Activated T-helper 1 cell treated with anti-CD3 and anti-CD28 coated beads, Interleukin-12 subunit alpha, Interleukin-12 subunit beta, Interleukin-2, Interleukin-4 antibody, amounts not matched to agents 30 ng/mL and 10 ng/mL and 1 ng/mL, durations not matched to agents 14 hours and 24 hours and 36 hours (primary cell): ENCODE measurements at regions of chr12 and their contacts with region 1.

Region 1: GRCh38 chr12:51326762-51327439 is 2.9 kb upstream of the BIN2 start:
- DNase-seq: peak; percentile 6
- H3K4me3 Mint-ChIP-seq: peak overlapping the region; percentile 55
- H3K27ac Mint-ChIP-seq: peak overlapping the region; percentile 89
- H3K4me1 Mint-ChIP-seq: peaks cover 75% of the 10 kb centered on the region
- H3K27me3 Mint-ChIP-seq: no peaks in the 10 kb centered on the region

Region 2: GRCh38 chr12:51025836-51026638 is 300.9 kb before region 1 on chr12 and contains the start of gene SLC11A2:
- intact Hi-C with region 1: loop called (anchors 2 kb)
- DNase-seq: peak; percentile 91
- H3K4me3 Mint-ChIP-seq: peak within 1 kb of the TSS; percentile 92
- H3K27ac Mint-ChIP-seq: peak within 1 kb of the TSS; percentile 98
- H3K4me1 Mint-ChIP-seq: peaks cover 55% of the 10 kb centered on the region
- H3K27me3 Mint-ChIP-seq: peaks cover 18% of the 10 kb centered on the region
- total RNA-seq, gene SLC11A2: 56.9 and 63.9 TPM in 2 replicates

Region 3: GRCh38 chr12:51217968-51218606 is 108.8 kb before region 1 on chr12 and contains the start of gene POU6F1:
- intact Hi-C with region 1: loop called (anchors 5 kb)
- DNase-seq: peak; percentile 60
- H3K4me3 Mint-ChIP-seq: peak within 1 kb of the TSS; percentile 76
- H3K27ac Mint-ChIP-seq: peak within 1 kb of the TSS; percentile 56
- H3K4me1 Mint-ChIP-seq: peaks cover 21% of the 10 kb centered on the region
- H3K27me3 Mint-ChIP-seq: no peaks in the 10 kb centered on the region
- total RNA-seq, gene POU6F1: 5.2 and 6.7 TPM in 2 replicates

Region 4: GRCh38 chr12:51229116-51229809 is 97.6 kb before region 1 on chr12:
- intact Hi-C with region 1: no loop called
- DNase-seq: no peak
- H3K4me3 Mint-ChIP-seq: no peak overlapping the region
- H3K27ac Mint-ChIP-seq: no peak overlapping the region
- H3K4me1 Mint-ChIP-seq: no peaks in the 10 kb centered on the region
- H3K27me3 Mint-ChIP-seq: no peaks in the 10 kb centered on the region

Region 5: DNA sequence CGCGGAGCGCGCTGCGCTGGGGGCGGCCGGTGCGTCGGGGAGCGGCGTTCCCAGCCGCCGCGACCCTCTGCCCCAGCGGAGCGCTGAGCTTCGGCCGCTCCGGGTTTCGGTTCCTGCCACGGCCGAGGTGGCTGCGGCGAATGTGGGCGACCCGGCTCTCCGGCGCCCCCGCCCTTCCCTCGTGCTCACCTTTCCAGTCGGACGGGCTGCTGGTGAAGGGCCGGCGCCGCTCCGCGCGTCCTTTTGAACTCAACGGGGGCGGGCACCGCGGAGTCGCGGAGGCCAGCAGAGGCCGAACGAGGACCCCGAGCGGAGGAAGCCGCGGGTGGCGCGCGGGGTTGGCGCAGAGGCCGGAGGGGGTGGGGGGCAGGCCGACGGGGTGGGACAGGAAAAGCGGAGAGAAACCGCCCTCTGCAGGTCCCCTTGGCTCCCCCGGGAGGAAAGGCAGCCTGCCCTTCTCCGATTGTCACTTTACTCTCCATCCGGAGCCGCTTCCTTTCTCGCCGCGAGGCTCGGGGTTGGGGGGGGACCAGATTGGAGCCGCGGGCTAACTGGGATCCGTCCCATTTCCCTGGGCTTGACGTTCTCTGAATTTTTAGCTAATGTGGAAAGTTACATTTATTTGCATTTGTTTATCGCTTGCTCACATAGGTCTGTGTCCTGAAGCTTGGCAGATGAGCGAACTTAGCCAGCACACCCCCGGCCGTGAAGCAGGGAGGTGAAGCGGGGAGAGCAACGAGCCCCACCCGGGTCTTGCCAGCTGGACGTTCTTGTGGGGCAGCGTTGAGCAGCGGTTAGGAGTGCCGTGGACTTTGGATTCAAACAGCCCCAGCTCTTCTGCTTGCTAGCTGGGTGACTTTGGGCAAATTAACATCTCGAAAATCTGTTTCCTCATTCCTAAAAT is 56.6 kb before region 1 on chr12 and contains the start of gene SMAGP:
- intact Hi-C with region 1: loop called (anchors 5 kb)
- DNase-seq: peak; percentile 33
- H3K4me3 Mint-ChIP-seq: peak within 1 kb of the TSS; percentile 88
- H3K27ac Mint-ChIP-seq: peak within 1 kb of the TSS; percentile 68
- H3K4me1 Mint-ChIP-seq: peaks cover 14% of the 10 kb centered on the region
- H3K27me3 Mint-ChIP-seq: peaks cover 30% of the 10 kb centered on the region
- total RNA-seq, gene SMAGP: 0.16 TPM in 1 of 2 replicates, not detected in the other

Region 6: GRCh38 chr12:51368640-51369517 is 42.0 kb after region 1 on chr12:
- intact Hi-C with region 1: loop called (anchors 1 kb)
- DNase-seq: peak; percentile 89
- H3K4me3 Mint-ChIP-seq: peak overlapping the region; percentile 56
- H3K27ac Mint-ChIP-seq: peak overlapping the region; percentile 70
- H3K4me1 Mint-ChIP-seq: peaks cover 67% of the 10 kb centered on the region
- H3K27me3 Mint-ChIP-seq: peaks cover 7% of the 10 kb centered on the region